ENCODE measurements at regions of chr9 and their contacts with region 1.

Region 1: GRCh38 chr9:34690983-34691935 is at the start of gene CCL19:
- DNase-seq: no peak
- H3K4me3 ChIP-seq: no peak within 1 kb of the TSS
- H3K27ac ChIP-seq: no peak within 1 kb of the TSS
- H3K4me1 ChIP-seq: no peaks in the 10 kb centered on the region
- H3K27me3 ChIP-seq: no peaks in the 10 kb centered on the region
- CTCF ChIP-seq: no peak
- POLR2A ChIP-seq: no peak
- total RNA-seq, gene CCL19: not detected

Region 2: DNA sequence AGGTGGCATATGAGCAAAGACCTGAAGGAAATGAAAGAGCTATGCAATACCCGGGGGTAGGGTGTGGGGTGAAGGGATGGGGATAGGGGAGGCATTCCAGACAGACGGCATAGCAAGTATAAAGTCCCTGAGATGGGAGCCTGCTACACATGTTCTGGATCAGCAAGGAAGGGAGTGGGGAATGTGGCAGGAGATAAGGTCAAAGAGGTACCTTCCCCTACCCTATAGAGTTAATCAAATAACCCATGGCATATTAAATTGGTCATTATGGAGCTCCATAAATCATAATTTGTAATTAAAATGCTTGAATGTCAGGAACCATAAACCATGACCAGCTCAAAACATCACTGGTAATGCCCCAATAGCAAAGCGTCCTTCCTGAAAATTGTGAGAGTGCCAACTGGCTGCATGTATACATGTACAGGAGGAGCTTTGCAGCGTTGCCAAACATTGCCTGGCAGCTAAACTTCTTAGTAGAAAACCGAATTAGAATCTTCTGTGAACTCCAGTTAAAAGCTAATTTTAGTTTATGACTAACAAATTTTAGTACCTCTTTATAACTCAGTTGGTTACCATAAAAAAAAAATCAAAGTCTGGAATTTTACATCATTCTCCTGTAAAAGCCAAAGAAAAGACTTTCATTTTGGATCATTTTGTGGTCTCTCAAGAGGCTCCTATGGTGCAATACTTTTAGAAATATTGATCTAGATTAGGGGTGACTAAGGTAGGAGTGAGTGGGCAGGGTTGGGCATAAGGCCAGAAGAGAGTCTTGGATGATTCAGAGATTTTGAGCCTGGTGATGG is 228.0 kb before region 1 on chr9:
- intact Hi-C with region 1: loop called (anchors 5 kb)
- DNase-seq: no peak
- H3K4me3 ChIP-seq: no peak overlapping the region
- H3K27ac ChIP-seq: no peak overlapping the region
- H3K4me1 ChIP-seq: peaks cover 4% of the 10 kb centered on the region
- H3K27me3 ChIP-seq: no peaks in the 10 kb centered on the region
- CTCF ChIP-seq: no peak
- POLR2A ChIP-seq: no peak

Region 3: GRCh38 chr9:34783951-34784487 is 92.8 kb after region 1 on chr9:
- intact Hi-C with region 1: no loop called
- DNase-seq: no peak
- H3K4me3 ChIP-seq: no peak overlapping the region
- H3K27ac ChIP-seq: no peak overlapping the region
- H3K4me1 ChIP-seq: no peaks in the 10 kb centered on the region
- H3K27me3 ChIP-seq: no peaks in the 10 kb centered on the region
- CTCF ChIP-seq: no peak
- POLR2A ChIP-seq: no peak